ENCODE measurements at regions of chr18 and their contacts with region 1.

Region 1: GRCh38 chr18:57095884-57096283 is 51.0 kb upstream of the BOD1L2 start:
- DNase-seq: no peak

Region 2: GRCh38 chr18:56962322-56962721 is 133.6 kb before region 1 on chr18:
- CTCF ChIA-PET with region 1: no interaction called
- POLR2A ChIA-PET with region 1: no interaction called
- DNase-seq: no peak

Region 3: DNA sequence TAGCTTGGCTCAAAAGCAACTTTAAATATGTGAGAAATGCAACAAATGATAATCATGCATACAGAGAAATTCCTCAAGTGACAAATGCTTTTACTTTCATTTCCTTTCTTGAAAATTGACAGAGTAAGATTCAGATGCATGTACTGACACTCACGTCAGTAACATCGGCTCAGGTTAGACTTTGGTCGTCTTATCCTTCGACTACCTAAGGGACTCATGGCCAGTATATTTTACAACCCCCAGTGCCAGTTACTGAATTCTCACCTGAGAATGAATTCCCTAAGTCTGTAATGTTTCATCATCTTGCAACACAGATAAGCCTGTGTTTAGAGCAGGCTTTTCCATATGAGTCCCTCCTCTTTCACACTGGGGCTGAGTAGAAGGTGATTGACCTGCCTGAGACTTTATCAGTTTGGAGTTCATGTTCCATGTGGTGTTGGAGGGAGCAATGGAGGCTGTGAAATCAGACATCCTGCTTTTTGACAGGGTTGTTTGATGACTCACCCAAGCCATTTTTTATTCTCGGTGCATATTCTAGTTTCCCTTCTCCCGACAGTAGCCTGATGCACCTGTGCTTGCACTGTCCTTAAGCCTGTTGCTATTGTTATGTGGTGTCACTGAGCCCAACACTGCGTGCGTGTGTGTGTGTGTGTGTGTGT is 737.7 kb after region 1 on chr18:
- CTCF ChIA-PET with region 1: interaction called, 10 read pairs
- POLR2A ChIA-PET with region 1: no interaction called
- DNase-seq: no peak

Measured in HEK293T (cell line).